ENCODE measurements at regions of chr20 and their contacts with region 1.

Region 1: DNA sequence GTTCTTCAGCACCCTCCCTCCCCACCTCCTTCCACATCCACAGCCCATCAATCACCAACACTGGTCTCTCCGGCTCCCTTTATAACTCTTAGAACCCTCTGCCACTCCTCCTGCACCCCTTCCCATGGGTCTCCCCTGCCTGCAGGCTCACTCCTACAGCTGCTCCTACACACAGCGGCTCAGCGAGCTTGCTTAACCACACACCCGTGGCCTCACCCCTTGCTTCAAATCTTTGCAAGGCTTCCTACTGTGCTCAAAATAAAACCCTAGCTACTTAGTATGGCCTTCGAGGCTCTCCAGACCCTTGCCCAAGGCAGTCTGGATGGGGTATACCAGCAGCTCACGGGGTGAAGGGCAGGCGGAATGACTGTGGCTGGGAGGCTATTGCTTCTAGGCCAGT is 63.7 kb downstream of the JPH2 start:
- DNase-seq: no peak
- H3K4me3 ChIP-seq: no peak overlapping the region
- H3K27ac ChIP-seq: no peak overlapping the region
- H3K4me1 ChIP-seq: no peaks in the 10 kb centered on the region
- H3K27me3 ChIP-seq: no peaks in the 10 kb centered on the region
- CTCF ChIP-seq: no peak
- POLR2A ChIP-seq: no peak

Region 2: GRCh38 chr20:44187051-44187762 is 64.0 kb after region 1 on chr20 and contains the start of gene JPH2:
- intact Hi-C with region 1: loop called (anchors 5 kb)
- DNase-seq: peak; percentile 65 to 92
- H3K4me3 ChIP-seq: peak within 1 kb of the TSS; percentile 33 to 73 (median 58)
- H3K27ac ChIP-seq: peak within 1 kb of the TSS; percentile 85 to 88
- H3K4me1 ChIP-seq: peaks cover 3 to 8% of the 10 kb centered on the region in 2 donors
- H3K27me3 ChIP-seq: peaks cover 0 to 7% of the 10 kb centered on the region in 2 donors
- CTCF ChIP-seq: peak in 1 of 3 donors; percentile 1
- POLR2A ChIP-seq: no peak
- total RNA-seq, gene JPH2: 9.3 to 16.4 (median 16.2) TPM

Measured in breast epithelium (tissue), 4 donors.